ENCODE measurements at regions of chr14 and their contacts with region 1.

Region 1: GRCh38 chr14:20682435-20683124 is 1.8 kb upstream of the RNASE4 start:
- H3K4me3 ChIP-seq: peak overlapping the region; percentile 68
- H3K27ac ChIP-seq: peak overlapping the region; percentile 96
- H3K4me1 ChIP-seq: no peaks in the 10 kb centered on the region; the same call in 1 of the 2 replicates
- CTCF ChIP-seq: no peak

Region 2: DNA sequence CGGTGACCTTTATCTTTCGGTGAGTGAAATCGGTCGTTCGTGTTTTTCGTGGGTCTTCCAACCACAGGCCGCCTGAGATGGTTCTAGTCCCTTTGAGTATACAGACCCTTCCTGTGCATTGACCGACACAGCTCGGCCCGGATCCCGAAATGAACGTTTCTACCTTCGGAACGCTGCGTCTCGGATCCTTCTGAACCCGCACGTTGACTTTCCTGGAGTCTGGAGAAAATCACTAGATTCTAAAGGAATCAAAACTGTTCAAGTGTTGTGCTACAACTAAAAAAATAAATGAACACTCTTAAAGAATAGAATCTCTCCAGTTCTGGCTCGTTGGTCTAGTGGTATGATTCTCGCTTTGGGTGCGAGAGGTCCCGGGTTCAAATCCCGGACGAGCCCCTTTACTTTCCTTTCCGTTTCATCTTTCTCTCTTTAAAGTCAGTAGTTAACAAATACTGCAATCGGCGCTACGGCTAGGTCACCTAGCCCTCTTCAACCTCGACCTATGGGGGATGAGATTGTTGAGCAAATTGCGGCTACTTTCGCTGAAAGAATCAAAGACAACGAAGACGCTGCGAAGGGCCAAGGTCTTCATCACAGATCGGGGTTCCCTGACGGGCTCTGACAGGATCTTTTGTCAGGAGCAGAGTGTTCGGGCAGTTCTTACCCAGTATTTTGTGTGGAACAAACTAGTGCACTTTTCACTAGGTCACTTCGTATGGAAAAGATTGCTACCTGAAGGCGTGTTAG is 49.7 kb before region 1 on chr14:
- CTCF ChIA-PET with region 1: interaction called, 4 read pairs
- POLR2A ChIA-PET with region 1: interaction called, 40 read pairs
- H3K4me3 ChIP-seq: peak overlapping the region; percentile 65
- H3K27ac ChIP-seq: no peak overlapping the region; the same call in 1 of the 2 replicates
- H3K4me1 ChIP-seq: no peaks in the 10 kb centered on the region
- CTCF ChIP-seq: no peak

Region 3: DNA sequence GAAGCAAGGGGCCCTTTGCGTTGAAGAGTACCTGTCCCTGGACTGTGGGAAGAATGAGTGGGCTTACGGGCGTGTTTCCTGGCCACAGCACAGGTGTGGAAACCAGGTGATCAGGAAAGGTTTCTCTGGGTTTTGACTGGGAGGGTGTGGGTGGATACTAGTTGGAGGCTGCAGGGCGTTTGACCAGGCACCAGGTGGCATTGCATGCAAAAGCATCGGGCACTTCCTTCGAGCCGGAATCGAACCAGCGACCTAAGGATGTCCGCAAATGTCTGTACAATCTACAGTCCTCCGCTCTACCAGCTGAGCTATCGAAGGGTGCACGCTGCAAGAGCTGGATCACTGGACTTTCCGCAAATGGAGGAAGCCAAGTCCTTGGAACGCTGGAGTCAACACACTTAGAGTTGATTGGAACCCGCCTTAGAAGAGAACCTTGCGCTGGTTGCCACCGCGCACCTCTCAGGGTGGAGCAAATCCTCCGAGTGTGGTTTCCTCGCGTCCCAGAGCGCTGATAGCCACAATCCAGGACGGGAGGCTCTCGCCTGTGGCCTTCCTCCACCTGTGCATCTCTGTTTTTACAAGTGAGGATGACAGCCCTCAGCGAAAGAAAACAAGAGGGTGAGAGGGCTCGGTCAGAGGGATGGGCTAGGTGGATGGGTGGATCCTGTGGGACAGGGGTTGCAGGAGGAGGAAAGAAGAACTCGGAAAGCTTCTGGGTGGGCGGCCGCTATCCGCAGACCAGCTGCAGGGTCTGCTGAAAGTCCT is 19.4 kb before region 1 on chr14:
- CTCF ChIA-PET with region 1: interaction called, 13 read pairs
- POLR2A ChIA-PET with region 1: interaction called, 16 read pairs
- H3K4me3 ChIP-seq: peak overlapping the region; percentile 59
- H3K27ac ChIP-seq: peak overlapping the region; percentile 59; the same call in 1 of the 2 replicates
- H3K4me1 ChIP-seq: no peaks in the 10 kb centered on the region
- CTCF ChIP-seq: peak; percentile 86

Region 4: DNA sequence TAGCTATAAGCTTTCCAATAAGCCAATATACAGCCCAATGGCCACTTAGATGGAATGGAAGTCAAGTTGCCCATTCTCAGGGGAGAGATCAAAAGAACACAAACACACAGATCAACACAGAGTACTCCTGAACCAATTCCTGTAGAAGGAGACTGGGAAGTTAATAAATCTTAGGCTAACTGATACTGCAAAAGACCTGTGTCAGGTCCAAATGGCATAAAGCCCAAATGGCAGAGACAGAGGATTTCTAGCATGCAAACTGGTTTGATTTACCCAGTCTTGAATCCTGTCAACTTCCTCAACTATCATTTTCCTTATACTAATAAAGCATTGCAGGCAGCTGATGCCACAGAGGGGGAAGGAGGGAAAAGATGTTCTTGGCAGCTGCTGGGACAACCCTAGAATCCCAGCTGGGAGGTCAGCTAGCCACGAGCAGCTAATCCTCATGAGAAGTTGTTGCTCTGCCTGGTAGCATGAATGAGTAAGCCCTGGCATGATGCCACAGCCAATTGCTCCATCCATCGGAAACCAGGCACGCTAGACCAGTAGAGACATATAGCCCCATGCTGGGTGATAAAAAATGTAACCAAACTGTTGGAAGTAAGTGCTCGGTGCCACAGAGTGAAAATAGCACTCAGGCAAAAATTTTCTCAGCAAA is 32.1 kb after region 1 on chr14:
- CTCF ChIA-PET with region 1: no interaction called
- POLR2A ChIA-PET with region 1: no interaction called
- H3K4me3 ChIP-seq: no peak overlapping the region
- H3K27ac ChIP-seq: no peak overlapping the region
- H3K4me1 ChIP-seq: no peaks in the 10 kb centered on the region
- CTCF ChIP-seq: no peak